ENCODE measurements at regions of chr7 and their contacts with region 1.

Region 1: GRCh38 chr7:103065667-103066066 is 8.9 kb downstream of the FBXL13 start:
- DNase-seq: peak; percentile 61
- H3K4me3 Mint-ChIP-seq: no peak overlapping the region
- H3K27ac Mint-ChIP-seq: no peak overlapping the region
- H3K4me1 Mint-ChIP-seq: no peaks in the 10 kb centered on the region
- H3K27me3 Mint-ChIP-seq: no peaks in the 10 kb centered on the region

Region 2: GRCh38 chr7:102412548-102412947 is 653.1 kb before region 1 on chr7:
- CTCF ChIA-PET with region 1: no interaction called
- POLR2A ChIA-PET with region 1: no interaction called
- intact Hi-C with region 1: no loop called
- DNase-seq: peak; percentile 53
- H3K4me3 Mint-ChIP-seq: no peak overlapping the region
- H3K27ac Mint-ChIP-seq: no peak overlapping the region
- H3K4me1 Mint-ChIP-seq: peaks cover 31% of the 10 kb centered on the region
- H3K27me3 Mint-ChIP-seq: no peaks in the 10 kb centered on the region

Region 3: DNA sequence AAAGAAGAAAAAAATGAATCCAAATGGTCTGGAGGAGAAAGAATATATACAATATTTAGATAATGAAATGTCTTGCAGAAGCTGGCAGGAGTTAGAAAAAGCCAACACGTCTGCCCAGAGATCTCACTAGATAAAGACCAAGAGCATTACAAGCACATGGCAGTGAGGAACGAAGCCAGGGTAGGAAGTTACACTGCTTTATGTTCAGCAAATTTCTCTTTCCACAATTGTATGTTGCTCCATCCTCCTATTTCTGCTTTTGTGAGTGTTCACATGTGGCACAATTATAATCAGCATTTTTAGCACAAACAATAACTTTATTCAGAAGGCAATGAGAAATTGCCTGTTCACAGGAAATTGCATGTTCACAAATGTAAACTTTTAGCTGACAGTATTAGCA is 99.2 kb before region 1 on chr7:
- CTCF ChIA-PET with region 1: no interaction called
- POLR2A ChIA-PET with region 1: no interaction called
- intact Hi-C with region 1: no loop called
- DNase-seq: no peak
- H3K4me3 Mint-ChIP-seq: no peak overlapping the region
- H3K27ac Mint-ChIP-seq: no peak overlapping the region
- H3K4me1 Mint-ChIP-seq: no peaks in the 10 kb centered on the region
- H3K27me3 Mint-ChIP-seq: no peaks in the 10 kb centered on the region

Region 4: DNA sequence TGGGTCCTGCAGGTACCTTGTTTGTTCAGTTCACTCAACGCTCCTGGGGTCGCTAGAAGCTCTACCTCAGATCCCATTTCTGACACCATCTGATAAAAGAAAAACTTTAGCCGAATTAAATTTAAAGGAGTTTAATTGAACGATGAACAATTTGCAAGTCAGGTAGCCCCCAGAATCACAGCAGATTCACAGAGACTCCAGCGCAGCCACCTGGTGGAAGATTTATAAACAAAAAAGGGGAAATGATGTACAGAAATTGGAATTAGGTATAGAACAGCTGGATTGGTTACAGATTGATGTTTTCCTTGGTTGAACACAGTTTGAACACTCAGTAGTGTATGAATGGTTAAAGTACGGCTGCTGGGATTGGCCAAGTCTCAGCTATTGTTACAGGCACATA is 14.1 kb before region 1 on chr7:
- CTCF ChIA-PET with region 1: interaction called, 10 read pairs
- POLR2A ChIA-PET with region 1: no interaction called
- intact Hi-C with region 1: no loop called
- DNase-seq: no peak
- H3K4me3 Mint-ChIP-seq: no peak overlapping the region
- H3K27ac Mint-ChIP-seq: no peak overlapping the region
- H3K4me1 Mint-ChIP-seq: no peaks in the 10 kb centered on the region
- H3K27me3 Mint-ChIP-seq: no peaks in the 10 kb centered on the region

Region 5: GRCh38 chr7:103532955-103533354 is 467.3 kb after region 1 on chr7:
- CTCF ChIA-PET with region 1: no interaction called
- POLR2A ChIA-PET with region 1: no interaction called
- intact Hi-C with region 1: no loop called
- DNase-seq: no peak
- H3K4me3 Mint-ChIP-seq: no peak overlapping the region
- H3K27ac Mint-ChIP-seq: no peak overlapping the region
- H3K4me1 Mint-ChIP-seq: no peaks in the 10 kb centered on the region
- H3K27me3 Mint-ChIP-seq: peaks cover 3% of the 10 kb centered on the region

Measured in activated CD4-positive, alpha-beta memory T cell treated with anti-CD3 and anti-CD28 coated beads for 36 hours (primary cell).